Activated naive CD4-positive, alpha-beta T cell treated with anti-CD3 and anti-CD28 coated beads, Interleukin-2, amount 10 ng/mL, durations not matched to agents 7 days and 5 days (primary cell): ENCODE measurements at regions of chr13 and their contacts with region 1.

Region 1: DNA sequence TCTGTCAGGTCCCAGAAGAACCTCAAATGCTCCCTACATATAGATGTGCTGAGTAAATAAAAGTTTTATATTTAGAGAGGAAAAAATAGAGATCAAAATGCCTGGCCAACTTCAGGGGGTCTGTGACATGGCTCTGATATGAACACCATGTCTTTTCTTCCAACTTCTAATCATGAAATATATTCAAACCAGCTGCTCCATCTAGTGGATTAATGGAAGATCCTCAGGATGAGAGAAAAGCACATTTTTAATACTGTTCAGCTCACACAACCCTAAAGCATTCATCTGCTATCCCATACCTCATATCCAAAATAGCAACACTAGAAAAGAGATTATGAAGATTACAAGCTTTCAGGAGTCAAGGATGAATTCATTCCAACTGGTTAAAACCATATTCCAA is 56.0 kb upstream of the DOCK9 start:
- DNase-seq: no peak
- H3K4me3 Mint-ChIP-seq: no peak overlapping the region
- H3K27ac Mint-ChIP-seq: no peak overlapping the region
- H3K4me1 Mint-ChIP-seq: peaks cover 16% of the 10 kb centered on the region
- H3K27me3 Mint-ChIP-seq: no peaks in the 10 kb centered on the region

Region 2: GRCh38 chr13:98842864-98843481 is 190.8 kb before region 1 on chr13:
- CTCF ChIA-PET with region 1: interaction called, 27 read pairs
- DNase-seq: peak; percentile 76
- H3K4me3 Mint-ChIP-seq: no peak overlapping the region
- H3K27ac Mint-ChIP-seq: no peak overlapping the region
- H3K4me1 Mint-ChIP-seq: no peaks in the 10 kb centered on the region
- H3K27me3 Mint-ChIP-seq: no peaks in the 10 kb centered on the region

Region 3: DNA sequence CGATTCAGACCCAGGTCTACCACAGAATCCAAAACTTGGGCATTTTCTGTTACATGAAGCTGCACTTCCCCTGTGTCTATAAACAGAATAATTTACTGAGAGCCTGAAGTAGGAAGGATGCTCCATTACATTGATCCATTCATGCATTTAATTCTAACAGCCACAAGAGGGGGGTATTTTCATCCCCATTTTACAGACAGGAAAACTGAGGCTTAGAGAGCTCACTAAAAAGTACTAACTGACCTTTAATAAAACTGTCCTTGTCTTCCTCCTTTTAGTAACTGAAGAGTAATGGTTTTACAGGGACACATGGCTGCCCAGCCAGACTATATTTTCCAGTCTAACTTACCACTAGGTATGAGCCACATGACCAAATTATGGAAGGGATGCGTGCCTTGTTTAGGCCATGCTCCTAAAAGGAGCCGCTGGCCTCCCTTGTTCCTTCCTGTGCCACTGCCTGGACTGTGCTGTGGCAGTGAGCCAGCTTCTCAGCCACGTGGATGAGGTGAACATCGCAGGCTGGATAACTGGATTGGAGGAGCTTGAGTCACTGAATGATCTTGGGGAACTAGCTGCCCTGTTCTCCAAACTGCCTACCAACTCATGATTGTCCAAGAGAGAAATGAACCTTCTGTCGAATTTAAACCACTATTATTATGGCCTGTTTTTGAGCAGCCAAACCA is 164.3 kb before region 1 on chr13:
- CTCF ChIA-PET with region 1: interaction called, 27 read pairs
- DNase-seq: no peak
- H3K4me3 Mint-ChIP-seq: no peak overlapping the region
- H3K27ac Mint-ChIP-seq: no peak overlapping the region
- H3K4me1 Mint-ChIP-seq: peaks cover 26% of the 10 kb centered on the region
- H3K27me3 Mint-ChIP-seq: no peaks in the 10 kb centered on the region

Region 4: GRCh38 chr13:99018418-99019180 is 15.2 kb before region 1 on chr13:
- CTCF ChIA-PET with region 1: interaction called, 15 read pairs
- DNase-seq: no peak
- H3K4me3 Mint-ChIP-seq: no peak overlapping the region
- H3K27ac Mint-ChIP-seq: no peak overlapping the region
- H3K4me1 Mint-ChIP-seq: peaks cover 33% of the 10 kb centered on the region
- H3K27me3 Mint-ChIP-seq: no peaks in the 10 kb centered on the region

Region 5: DNA sequence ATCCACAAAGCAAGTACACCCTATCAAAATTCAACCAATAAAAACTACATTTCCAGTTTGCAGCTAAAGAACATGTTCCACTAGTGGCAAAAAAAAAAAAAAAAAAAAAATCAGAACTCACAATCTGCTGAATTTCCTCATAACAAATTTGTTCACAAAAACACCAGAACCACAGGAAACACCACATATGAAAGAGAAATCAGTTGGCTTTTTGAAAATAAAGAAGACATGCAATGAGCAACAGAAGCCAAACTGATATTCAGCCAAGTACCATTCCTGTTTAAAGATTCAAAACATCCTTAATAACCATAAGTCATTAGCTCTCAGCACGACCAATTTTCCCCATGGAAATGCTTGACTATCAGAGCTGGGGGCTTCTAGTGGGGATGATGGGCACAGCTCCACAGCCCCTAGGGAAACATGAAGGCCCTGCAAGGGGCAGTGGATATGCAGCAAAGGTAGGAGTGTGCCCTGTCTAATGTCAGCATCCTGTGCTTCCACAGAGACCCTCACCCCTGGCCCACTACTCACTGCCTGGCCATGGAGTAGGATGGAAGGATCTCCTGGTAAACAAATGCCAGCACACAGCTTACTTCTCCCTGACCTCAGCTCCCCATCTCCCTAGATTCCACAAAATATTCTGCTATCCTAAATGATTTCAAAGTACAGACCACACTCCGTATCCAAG is 18.1 kb after region 1 on chr13:
- CTCF ChIA-PET with region 1: interaction called, 22 read pairs
- DNase-seq: no peak
- H3K4me3 Mint-ChIP-seq: peak overlapping the region; percentile 69
- H3K27ac Mint-ChIP-seq: peak overlapping the region; percentile 99
- H3K4me1 Mint-ChIP-seq: peaks cover 92% of the 10 kb centered on the region
- H3K27me3 Mint-ChIP-seq: no peaks in the 10 kb centered on the region

Region 6: GRCh38 chr13:99133230-99133629 is 99.4 kb after region 1 on chr13:
- CTCF ChIA-PET with region 1: no interaction called
- DNase-seq: no peak
- H3K4me3 Mint-ChIP-seq: no peak overlapping the region
- H3K27ac Mint-ChIP-seq: peak overlapping the region; percentile 36
- H3K4me1 Mint-ChIP-seq: no peaks in the 10 kb centered on the region
- H3K27me3 Mint-ChIP-seq: peaks cover 10% of the 10 kb centered on the region